GM13976 (cell line): ENCODE measurements at regions of chrX and their contacts with region 1.

Region 1: GRCh38 chrX:16882702-16883486 is 12.7 kb upstream of the RBBP7 start:
- DNase-seq: peak; percentile 59
- CTCF ChIP-seq: peak; percentile 61

Region 2: GRCh38 chrX:16670998-16671397 is 211.9 kb before region 1 on chrX:
- in situ Hi-C with region 1: no loop called
- DNase-seq: peak; percentile 49
- CTCF ChIP-seq: peak; percentile 11

Region 3: DNA sequence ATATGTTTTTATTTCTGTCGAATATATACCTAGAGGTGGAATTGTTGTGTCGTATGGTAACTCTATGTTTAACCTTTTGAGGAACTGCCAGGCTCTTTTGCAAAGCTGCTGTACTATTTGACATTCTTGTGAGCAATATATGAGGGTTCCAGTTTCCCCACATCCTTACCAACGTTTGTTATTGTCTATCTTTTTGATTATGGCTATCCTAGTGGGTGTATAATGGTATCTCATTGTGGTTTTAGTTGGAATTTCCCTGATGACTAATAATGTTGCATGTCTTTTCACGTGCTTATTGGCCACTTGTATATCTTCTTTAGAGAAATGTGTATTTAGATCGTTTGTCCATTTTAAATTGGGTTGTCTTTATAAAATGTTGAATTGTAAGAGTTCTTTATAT is 88.1 kb after region 1 on chrX:
- in situ Hi-C with region 1: no loop called
- DNase-seq: no peak
- CTCF ChIP-seq: no peak

Region 4: GRCh38 chrX:17046478-17047097 is 163.7 kb after region 1 on chrX:
- in situ Hi-C with region 1: loop called (anchors 10 kb)
- DNase-seq: peak; percentile 43
- CTCF ChIP-seq: peak; percentile 78